Right lobe of liver (tissue), 6 donors: ENCODE measurements at regions of chr6 and their contacts with region 1.

Region 1: DNA sequence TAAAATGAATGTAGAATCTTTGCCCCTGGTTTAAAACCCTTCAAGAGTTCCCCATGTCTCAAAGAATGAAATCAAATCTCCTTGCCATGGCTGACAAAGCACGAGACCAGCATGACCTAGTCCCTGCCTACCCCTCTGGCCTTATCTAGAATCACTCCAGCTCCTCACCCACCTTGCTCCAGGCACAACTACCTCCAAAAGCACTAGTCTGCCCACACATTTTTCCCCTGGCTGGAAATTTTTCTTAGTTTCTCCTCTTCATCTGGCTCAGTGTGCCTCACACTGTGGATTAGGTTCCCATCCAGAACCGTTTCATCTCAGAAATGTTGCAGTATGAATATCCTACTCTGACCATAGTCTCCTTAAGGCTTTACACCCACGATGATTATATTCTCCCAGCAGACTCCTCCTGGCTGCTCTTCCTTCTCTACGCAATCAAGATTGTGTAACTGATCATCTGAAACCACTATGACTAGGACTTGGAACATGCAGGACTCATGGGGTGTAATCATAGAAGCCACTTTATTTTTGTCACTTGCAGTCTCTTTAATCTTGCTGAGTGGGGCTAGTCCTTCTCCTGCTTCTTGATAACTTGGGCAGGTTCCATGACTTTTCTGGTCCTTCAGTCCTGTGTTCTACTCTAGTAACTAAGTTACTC is 7.8 kb upstream of the MRS2 start:
- DNase-seq: no peak
- ATAC-seq: peak in 1 of 4 donors; percentile 42
- H3K4me3 ChIP-seq: no peak overlapping the region
- H3K27ac ChIP-seq: no peak overlapping the region
- H3K4me1 ChIP-seq: no peaks in the 10 kb centered on the region
- H3K27me3 ChIP-seq: no peaks in the 10 kb centered on the region
- CTCF ChIP-seq: no peak
- POLR2A ChIP-seq: no peak

Region 2: DNA sequence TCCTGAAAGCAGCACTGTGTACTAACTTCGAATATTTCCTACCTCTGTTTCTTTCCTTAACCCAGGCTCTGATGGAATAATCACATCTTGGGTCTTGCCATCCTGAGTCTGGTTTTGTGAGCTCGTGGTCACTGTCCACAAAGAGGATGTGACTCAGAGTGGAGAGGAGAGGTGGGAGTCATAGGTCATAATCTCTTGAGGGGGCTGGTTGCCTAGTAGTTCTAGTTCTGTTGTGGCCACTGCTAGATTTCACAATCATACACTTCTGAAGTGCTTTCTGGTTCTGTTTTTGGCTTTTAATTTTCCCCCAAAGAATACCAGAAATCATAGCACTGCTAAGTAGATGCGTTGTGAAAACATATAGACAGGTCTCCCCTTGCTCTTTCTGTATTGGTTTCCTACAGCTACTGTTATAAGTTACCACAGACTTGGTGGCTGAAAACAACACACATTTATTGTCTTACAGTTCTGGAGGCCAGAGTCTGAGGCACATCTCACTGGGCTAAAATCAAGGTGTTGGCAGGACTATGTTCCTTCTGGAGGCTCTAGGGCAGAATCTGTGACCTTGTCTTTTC is 166.1 kb before region 1 on chr6:
- intact Hi-C with region 1: no loop called
- DNase-seq: no peak
- ATAC-seq: peak in 1 of 4 donors; percentile 70
- H3K4me3 ChIP-seq: no peak overlapping the region
- H3K27ac ChIP-seq: no peak overlapping the region
- H3K4me1 ChIP-seq: no peaks in the 10 kb centered on the region
- H3K27me3 ChIP-seq: no peaks in the 10 kb centered on the region
- CTCF ChIP-seq: no peak
- POLR2A ChIP-seq: no peak

Region 3: DNA sequence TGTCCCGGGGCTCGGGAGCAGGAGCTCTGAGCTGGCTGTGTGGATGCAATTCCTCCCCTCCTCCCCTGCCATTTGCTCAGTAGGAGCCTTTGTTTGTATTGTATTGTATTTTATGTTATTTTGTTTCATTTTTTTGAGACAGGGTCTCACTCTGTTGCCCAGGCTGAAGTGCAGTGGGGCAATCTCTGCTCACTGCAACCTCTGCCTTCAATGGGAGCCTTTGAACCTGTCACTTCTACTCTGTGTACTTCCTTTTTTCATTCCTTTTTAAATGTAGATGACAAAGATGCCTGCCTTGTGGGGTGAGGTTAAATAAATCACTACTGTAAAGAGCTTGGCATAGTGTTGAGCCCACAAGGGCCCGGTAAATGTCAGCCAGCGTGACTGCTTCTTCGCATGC is 107.7 kb before region 1 on chr6:
- intact Hi-C with region 1: loop called (anchors 5 to 10 kb)
- DNase-seq: no peak
- ATAC-seq: no peak
- H3K4me3 ChIP-seq: no peak overlapping the region
- H3K27ac ChIP-seq: no peak overlapping the region
- H3K4me1 ChIP-seq: peaks cover 0 to 11% (median 5%) of the 10 kb centered on the region in 4 donors
- H3K27me3 ChIP-seq: no peaks in the 10 kb centered on the region
- CTCF ChIP-seq: no peak
- POLR2A ChIP-seq: no peak

Region 4: GRCh38 chr6:24296944-24297343 is 98.0 kb before region 1 on chr6:
- intact Hi-C with region 1: loop called in 1 of 2 experiments (anchors 10 kb)
- DNase-seq: no peak
- ATAC-seq: no peak
- H3K4me3 ChIP-seq: no peak overlapping the region
- H3K27ac ChIP-seq: no peak overlapping the region
- H3K4me1 ChIP-seq: no peaks in the 10 kb centered on the region
- H3K27me3 ChIP-seq: no peaks in the 10 kb centered on the region
- CTCF ChIP-seq: no peak
- POLR2A ChIP-seq: no peak

Region 5: GRCh38 chr6:24646782-24647181 is 251.9 kb after region 1 on chr6:
- intact Hi-C with region 1: no loop called
- DNase-seq: no peak
- ATAC-seq: no peak
- H3K4me3 ChIP-seq: no peak overlapping the region
- H3K27ac ChIP-seq: no peak overlapping the region
- H3K4me1 ChIP-seq: no peaks in the 10 kb centered on the region
- H3K27me3 ChIP-seq: no peaks in the 10 kb centered on the region
- CTCF ChIP-seq: no peak
- POLR2A ChIP-seq: no peak

Region 6: GRCh38 chr6:24933868-24934401 is 539.0 kb after region 1 on chr6:
- intact Hi-C with region 1: no loop called
- DNase-seq: no peak
- ATAC-seq: peak; percentile 58 to 65 (median 62)
- H3K4me3 ChIP-seq: peak overlapping the region in 1 of 3 donors; percentile 19
- H3K27ac ChIP-seq: no peak overlapping the region
- H3K4me1 ChIP-seq: no peaks in the 10 kb centered on the region
- H3K27me3 ChIP-seq: no peaks in the 10 kb centered on the region
- CTCF ChIP-seq: peak; percentile 30 to 65 (median 54)
- POLR2A ChIP-seq: no peak